ENCODE measurements at regions of chr1 and their contacts with region 1.

Region 1: GRCh38 chr1:20376880-20377494 is 86.3 kb downstream of the VWA5B1 start:
- DNase-seq: peak; percentile 50 to 86 (median 64)
- H3K4me3 ChIP-seq: no peak overlapping the region
- H3K27ac ChIP-seq: no peak overlapping the region
- H3K4me1 ChIP-seq: peaks cover 4 to 11% of the 10 kb centered on the region in 2 donors
- H3K27me3 ChIP-seq: no peaks in the 10 kb centered on the region
- CTCF ChIP-seq: peak; percentile 66 to 87 (median 74)
- POLR2A ChIP-seq: no peak

Region 2: DNA sequence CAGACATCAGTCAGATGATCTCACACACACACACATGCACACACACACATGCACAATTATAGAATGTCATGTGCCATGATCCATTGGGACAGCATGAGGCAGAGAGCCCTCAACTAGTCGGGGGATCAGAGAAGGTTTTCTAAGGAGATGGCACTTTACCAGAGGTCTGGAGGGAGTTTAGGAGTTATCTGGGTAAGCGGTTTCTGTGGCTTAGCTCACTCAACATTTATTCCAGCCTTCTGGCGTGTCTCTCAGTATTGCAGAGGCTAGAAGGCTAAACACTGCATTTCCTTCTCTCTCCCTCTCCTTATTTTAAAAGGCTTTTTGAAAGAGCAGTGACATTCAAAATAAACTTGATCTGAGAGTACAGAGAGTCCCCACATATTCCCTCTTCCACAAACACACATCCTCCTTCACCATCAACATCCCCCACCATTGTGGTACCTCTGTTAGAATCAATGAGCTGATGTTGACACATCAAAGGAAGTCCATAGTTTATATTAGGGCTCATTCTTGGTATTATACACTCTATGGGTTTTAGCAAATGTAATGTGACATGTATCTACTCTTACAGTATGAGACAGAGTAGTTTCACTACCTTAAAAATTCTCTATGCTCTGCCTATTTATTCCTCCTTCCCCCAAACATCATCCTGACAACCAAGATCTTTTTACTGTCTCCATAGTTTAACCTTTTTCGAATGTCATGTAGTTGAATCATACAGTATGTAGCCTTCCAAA is 388.6 kb before region 1 on chr1:
- intact Hi-C with region 1: no loop called
- DNase-seq: no peak
- H3K4me3 ChIP-seq: no peak overlapping the region
- H3K27ac ChIP-seq: no peak overlapping the region
- H3K4me1 ChIP-seq: no peaks in the 10 kb centered on the region
- H3K27me3 ChIP-seq: peaks cover 15% of the 10 kb centered on the region
- CTCF ChIP-seq: no peak
- POLR2A ChIP-seq: no peak

Region 3: DNA sequence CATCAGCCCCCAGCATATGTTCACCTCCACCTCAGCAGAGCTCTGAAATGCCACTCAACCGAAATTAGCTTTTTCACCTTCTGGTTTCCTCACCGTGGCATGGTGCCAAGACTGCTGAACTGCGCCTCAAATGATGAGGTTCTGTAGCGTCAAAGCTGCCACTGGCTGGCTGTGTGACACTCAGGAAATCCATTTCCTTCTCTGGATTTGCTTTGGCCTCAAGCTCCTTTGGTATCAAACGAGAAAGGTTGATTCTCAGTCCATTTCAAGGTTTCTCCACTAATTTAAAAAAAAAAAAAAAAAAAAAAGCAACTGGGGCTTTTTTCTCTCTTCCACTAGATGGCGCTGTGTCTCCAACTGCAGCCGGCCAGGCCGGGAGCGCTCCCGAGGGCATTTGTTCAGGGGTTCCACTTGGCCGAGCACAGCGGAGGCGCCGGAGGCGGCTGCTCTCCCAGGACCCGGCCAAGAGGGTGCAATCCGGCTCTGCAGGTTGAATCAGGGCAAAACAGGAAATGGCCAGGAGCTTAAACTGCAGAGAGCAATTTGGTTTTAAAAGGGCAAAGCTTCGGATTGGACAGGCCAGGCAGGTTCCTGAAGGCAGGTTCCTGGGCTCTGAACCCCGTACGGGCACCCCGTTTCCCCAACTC is 164.2 kb before region 1 on chr1:
- intact Hi-C with region 1: loop called in 1 of 2 experiments (anchors 10 kb)
- DNase-seq: peak; percentile 59 to 81 (median 74)
- H3K4me3 ChIP-seq: no peak overlapping the region
- H3K27ac ChIP-seq: peak overlapping the region in 3 of 5 donors; percentile 83 to 93 (median 87)
- H3K4me1 ChIP-seq: peaks cover 17 to 28% of the 10 kb centered on the region in 2 donors
- H3K27me3 ChIP-seq: no peaks in the 10 kb centered on the region
- CTCF ChIP-seq: peak; percentile 57 to 87 (median 72)
- POLR2A ChIP-seq: no peak

Region 4: DNA sequence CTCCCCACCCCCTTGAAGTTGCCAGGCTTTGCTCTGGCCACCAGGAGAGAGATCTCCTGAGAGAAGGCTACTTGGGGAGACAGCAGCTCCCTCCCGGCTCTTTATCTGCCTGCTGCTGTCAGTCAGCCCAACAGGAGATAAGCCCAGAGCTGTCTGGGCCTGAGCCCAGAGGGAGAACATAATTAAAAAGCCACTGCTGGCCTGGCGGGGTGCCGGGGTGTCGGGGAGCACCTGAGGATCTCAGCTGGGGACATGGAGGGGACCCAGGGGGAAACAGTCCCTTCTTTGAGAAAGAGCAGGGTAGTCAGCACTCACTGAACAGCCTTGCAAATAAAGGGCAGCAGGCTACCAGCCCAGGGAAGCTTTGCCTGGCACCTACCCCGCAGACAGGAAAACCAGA is 68.4 kb before region 1 on chr1:
- intact Hi-C with region 1: no loop called
- DNase-seq: peak in 6 of 7 donors; percentile 21 to 63 (median 36)
- H3K4me3 ChIP-seq: no peak overlapping the region
- H3K27ac ChIP-seq: no peak overlapping the region
- H3K4me1 ChIP-seq: peaks cover 0 to 8% of the 10 kb centered on the region in 2 donors
- H3K27me3 ChIP-seq: no peaks in the 10 kb centered on the region
- CTCF ChIP-seq: no peak
- POLR2A ChIP-seq: no peak